B cell (primary cell): ENCODE measurements at regions of chrX and their contacts with region 1.

Region 1: DNA sequence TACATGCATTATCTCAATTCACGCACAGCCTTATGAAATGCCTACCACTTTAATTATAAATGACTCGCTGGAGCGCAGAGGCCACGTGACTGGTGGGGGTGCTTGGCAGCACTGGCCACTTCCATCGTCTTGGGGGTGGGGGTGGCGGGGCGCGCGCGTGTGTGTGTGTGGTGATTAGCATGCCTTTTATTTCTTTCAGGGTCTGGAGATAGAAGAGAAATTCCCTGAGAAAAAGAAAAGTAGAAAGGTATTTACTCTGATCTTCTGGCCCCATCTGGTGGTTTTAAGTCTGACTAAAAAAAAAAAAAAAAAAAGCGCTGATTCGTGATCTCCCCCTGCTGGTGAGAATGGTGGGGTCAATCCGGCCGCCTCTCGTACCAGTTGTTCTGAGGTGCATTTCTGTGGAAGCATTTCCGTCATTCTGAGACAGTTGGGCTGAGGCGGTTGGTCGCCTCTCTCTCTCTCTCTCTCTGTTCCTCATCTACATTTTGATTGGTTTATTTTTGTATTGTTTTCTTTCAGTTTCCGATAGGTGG is at the start of gene CCNB3:
- DNase-seq: peak; percentile 87
- ATAC-seq: peak; percentile 94
- H3K4me3 ChIP-seq: peak within 1 kb of the TSS in 4 of 5 experiments; percentile 33 to 71 (median 40)
- H3K4me3 Mint-ChIP-seq: peak within 1 kb of the TSS; percentile 77
- H3K27ac ChIP-seq: peak within 1 kb of the TSS; percentile 38 to 51
- H3K27ac Mint-ChIP-seq: peak within 1 kb of the TSS; percentile 74
- H3K4me1 ChIP-seq: peaks cover 5 to 6% of the 10 kb centered on the region in 2 donors
- H3K4me1 Mint-ChIP-seq: peaks cover 11% of the 10 kb centered on the region
- H3K27me3 ChIP-seq: no peaks in the 10 kb centered on the region
- H3K27me3 Mint-ChIP-seq: no peaks in the 10 kb centered on the region
- CTCF ChIP-seq: peak; percentile 68
- total RNA-seq, gene CCNB3: 0.07 and 0.66 TPM in 2 replicates

Region 2: GRCh38 chrX:49922291-49923241 is 281.9 kb before region 1 on chrX and contains the start of gene CLCN5:
- CTCF ChIA-PET with region 1: interaction called, 6 read pairs
- POLR2A ChIA-PET with region 1: no interaction called
- intact Hi-C with region 1: loop called (anchors 2 kb)
- DNase-seq: peak; percentile 95
- ATAC-seq: peak; percentile 91
- H3K4me3 ChIP-seq: peak within 1 kb of the TSS; percentile 55 to 71 (median 64)
- H3K4me3 Mint-ChIP-seq: peak within 1 kb of the TSS; percentile 84
- H3K27ac ChIP-seq: peak within 1 kb of the TSS; percentile 24 to 61
- H3K27ac Mint-ChIP-seq: peak within 1 kb of the TSS; percentile 64
- H3K4me1 ChIP-seq: peaks cover 0 to 11% of the 10 kb centered on the region in 2 donors
- H3K4me1 Mint-ChIP-seq: peaks cover 10% of the 10 kb centered on the region
- H3K27me3 ChIP-seq: no peaks in the 10 kb centered on the region
- H3K27me3 Mint-ChIP-seq: no peaks in the 10 kb centered on the region
- CTCF ChIP-seq: no peak
- total RNA-seq, gene CLCN5: 3.6 and 6.3 TPM in 2 replicates